Endothelial cell of umbilical vein (primary cell): ENCODE measurements at regions of chrX and their contacts with region 1.

Region 1: GRCh38 chrX:1453951-1454785 is 1.5 kb upstream of the ASMTL start:
- DNase-seq: peak; percentile 88
- H3K4me3 ChIP-seq: peak overlapping the region in 1 of 3 experiments; percentile 73
- H3K27ac ChIP-seq: no peak overlapping the region
- H3K4me1 ChIP-seq: peaks cover 2% of the 10 kb centered on the region
- H3K27me3 ChIP-seq: no peaks in the 10 kb centered on the region
- CTCF ChIP-seq: peak; percentile 92 to 97
- POLR2A ChIP-seq: no peak

Region 2: DNA sequence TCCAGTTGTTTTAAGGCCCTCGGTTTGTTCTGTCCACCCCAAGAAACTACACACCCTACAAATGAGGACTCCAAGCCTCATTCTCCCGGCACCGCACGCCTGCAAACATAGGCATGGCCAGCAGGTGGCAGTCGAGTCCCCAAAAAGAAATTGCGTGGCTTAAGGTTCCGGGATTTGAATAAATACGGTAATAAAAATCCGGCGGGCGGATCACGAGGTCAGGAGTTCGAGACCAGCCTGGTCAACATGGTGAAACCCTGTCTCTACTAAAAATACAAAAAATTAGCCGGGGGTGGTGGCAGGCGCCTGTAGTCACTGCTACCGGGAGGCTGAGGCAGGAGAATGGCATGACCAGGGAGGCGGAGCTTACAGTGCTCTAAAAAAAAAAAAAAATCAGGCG is 207.4 kb before region 1 on chrX:
- CTCF ChIA-PET with region 1: no interaction called
- POLR2A ChIA-PET with region 1: no interaction called
- dilution Hi-C with region 1: no loop called
- intact Hi-C with region 1: loop called (anchors 10 kb)
- DNase-seq: peak; percentile 63
- H3K4me3 ChIP-seq: no peak overlapping the region
- H3K27ac ChIP-seq: no peak overlapping the region
- H3K4me1 ChIP-seq: no peaks in the 10 kb centered on the region
- H3K27me3 ChIP-seq: peaks cover 2% of the 10 kb centered on the region in 2 experiments
- CTCF ChIP-seq: peak; percentile 72 to 74
- POLR2A ChIP-seq: no peak

Region 3: DNA sequence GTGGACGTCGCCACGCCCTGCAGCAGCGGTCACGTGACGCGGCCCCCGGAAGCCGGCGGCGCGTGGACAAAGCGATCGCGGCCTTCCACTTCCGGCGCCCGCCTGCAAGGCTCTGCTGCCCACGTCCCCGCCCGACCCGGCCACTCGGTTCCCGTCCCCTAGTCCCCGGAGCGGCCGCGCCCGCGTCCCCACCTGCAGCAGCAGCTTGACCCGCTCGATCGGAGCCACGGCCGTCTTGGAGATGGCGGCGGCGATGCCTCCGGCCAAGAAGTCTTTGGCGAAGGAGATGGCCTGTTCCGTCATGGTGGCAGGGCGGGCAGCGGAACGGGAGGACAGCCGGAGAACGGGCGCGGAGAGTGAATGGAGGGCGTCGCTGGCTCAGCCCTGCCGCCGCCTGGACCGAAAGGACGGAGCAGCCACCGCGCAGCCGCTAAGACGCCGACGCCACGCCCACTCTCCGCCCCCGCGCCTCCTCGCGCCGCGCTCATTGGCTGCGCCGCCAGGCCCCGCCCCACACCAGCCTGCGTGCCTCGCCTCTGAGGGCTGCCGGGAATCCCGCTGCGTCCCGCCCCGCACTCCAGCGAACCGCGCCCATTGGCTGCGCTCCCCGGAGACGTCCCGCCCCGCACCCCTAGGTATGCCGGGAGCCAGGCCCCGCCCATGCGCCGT is 62.3 kb before region 1 on chrX and contains the start of gene SLC25A6:
- CTCF ChIA-PET with region 1: no interaction called
- POLR2A ChIA-PET with region 1: no interaction called
- dilution Hi-C with region 1: no loop called
- intact Hi-C with region 1: loop called (anchors 1 kb)
- DNase-seq: peak; percentile 99
- H3K4me3 ChIP-seq: peak within 1 kb of the TSS; percentile 66 to 100 (median 89)
- H3K27ac ChIP-seq: peak within 1 kb of the TSS; percentile 73
- H3K4me1 ChIP-seq: peaks cover 15% of the 10 kb centered on the region
- H3K27me3 ChIP-seq: no peaks in the 10 kb centered on the region
- CTCF ChIP-seq: peak in 1 of 2 donors; percentile 14
- POLR2A ChIP-seq: peak; percentile 72
- total RNA-seq, gene SLC25A6: 408 and 410 TPM in 2 replicates

Region 4: DNA sequence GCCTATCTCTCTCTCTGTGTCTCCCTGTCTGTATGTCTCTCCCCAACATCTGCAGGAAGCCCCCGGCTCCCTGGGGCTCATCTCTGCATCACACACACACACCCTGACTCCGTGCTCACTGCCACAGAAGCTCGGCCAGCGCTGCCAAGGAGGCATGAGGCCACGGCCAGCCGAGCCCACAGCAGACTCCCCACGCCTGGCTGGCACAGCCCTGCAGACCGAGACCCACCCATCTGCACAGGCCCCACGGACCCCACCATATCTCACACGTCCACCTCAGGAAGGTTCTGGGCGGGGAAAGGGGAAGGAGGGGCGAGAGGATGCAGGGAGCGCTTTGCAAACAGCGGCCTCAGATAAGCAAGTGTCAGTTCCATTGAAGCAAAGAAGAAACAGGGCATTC is 33.8 kb before region 1 on chrX:
- CTCF ChIA-PET with region 1: no interaction called
- POLR2A ChIA-PET with region 1: no interaction called
- dilution Hi-C with region 1: no loop called
- intact Hi-C with region 1: no loop called
- DNase-seq: no peak
- H3K4me3 ChIP-seq: no peak overlapping the region
- H3K27ac ChIP-seq: no peak overlapping the region
- H3K4me1 ChIP-seq: no peaks in the 10 kb centered on the region
- H3K27me3 ChIP-seq: no peaks in the 10 kb centered on the region
- CTCF ChIP-seq: no peak
- POLR2A ChIP-seq: no peak

Region 5: GRCh38 chrX:1591102-1591900 is 137.1 kb after region 1 on chrX and contains the start of gene AKAP17A:
- CTCF ChIA-PET with region 1: no interaction called
- POLR2A ChIA-PET with region 1: no interaction called
- dilution Hi-C with region 1: no loop called
- intact Hi-C with region 1: loop called (anchors 1 kb)
- DNase-seq: peak; percentile 95
- H3K4me3 ChIP-seq: peak within 1 kb of the TSS; percentile 76 to 96 (median 90)
- H3K27ac ChIP-seq: peak within 1 kb of the TSS; percentile 89
- H3K4me1 ChIP-seq: peaks cover 2% of the 10 kb centered on the region
- H3K27me3 ChIP-seq: no peaks in the 10 kb centered on the region
- CTCF ChIP-seq: no peak
- POLR2A ChIP-seq: peak; percentile 88
- total RNA-seq, gene AKAP17A: 39.7 and 45.5 TPM in 2 replicates

Region 6: GRCh38 chrX:1657367-1658070 is 203.4 kb after region 1 on chrX:
- CTCF ChIA-PET with region 1: no interaction called
- POLR2A ChIA-PET with region 1: no interaction called
- dilution Hi-C with region 1: no loop called
- intact Hi-C with region 1: loop called (anchors 1 kb)
- DNase-seq: peak; percentile 77
- H3K4me3 ChIP-seq: peak overlapping the region in 2 of 3 experiments; percentile 17 to 60
- H3K27ac ChIP-seq: peak overlapping the region; percentile 38
- H3K4me1 ChIP-seq: peaks cover 8% of the 10 kb centered on the region
- H3K27me3 ChIP-seq: no peaks in the 10 kb centered on the region
- CTCF ChIP-seq: no peak
- POLR2A ChIP-seq: peak; percentile 45

Region 7: GRCh38 chrX:2589186-2590030 is 1135.2 kb after region 1 on chrX:
- CTCF ChIA-PET with region 1: no interaction called
- POLR2A ChIA-PET with region 1: no interaction called
- dilution Hi-C with region 1: no loop called
- intact Hi-C with region 1: loop called (anchors 1 kb)
- DNase-seq: no peak
- H3K4me3 ChIP-seq: no peak overlapping the region
- H3K27ac ChIP-seq: no peak overlapping the region
- H3K4me1 ChIP-seq: no peaks in the 10 kb centered on the region
- H3K27me3 ChIP-seq: peaks cover 10 to 16% of the 10 kb centered on the region in 2 experiments
- CTCF ChIP-seq: no peak
- POLR2A ChIP-seq: no peak

Region 8: DNA sequence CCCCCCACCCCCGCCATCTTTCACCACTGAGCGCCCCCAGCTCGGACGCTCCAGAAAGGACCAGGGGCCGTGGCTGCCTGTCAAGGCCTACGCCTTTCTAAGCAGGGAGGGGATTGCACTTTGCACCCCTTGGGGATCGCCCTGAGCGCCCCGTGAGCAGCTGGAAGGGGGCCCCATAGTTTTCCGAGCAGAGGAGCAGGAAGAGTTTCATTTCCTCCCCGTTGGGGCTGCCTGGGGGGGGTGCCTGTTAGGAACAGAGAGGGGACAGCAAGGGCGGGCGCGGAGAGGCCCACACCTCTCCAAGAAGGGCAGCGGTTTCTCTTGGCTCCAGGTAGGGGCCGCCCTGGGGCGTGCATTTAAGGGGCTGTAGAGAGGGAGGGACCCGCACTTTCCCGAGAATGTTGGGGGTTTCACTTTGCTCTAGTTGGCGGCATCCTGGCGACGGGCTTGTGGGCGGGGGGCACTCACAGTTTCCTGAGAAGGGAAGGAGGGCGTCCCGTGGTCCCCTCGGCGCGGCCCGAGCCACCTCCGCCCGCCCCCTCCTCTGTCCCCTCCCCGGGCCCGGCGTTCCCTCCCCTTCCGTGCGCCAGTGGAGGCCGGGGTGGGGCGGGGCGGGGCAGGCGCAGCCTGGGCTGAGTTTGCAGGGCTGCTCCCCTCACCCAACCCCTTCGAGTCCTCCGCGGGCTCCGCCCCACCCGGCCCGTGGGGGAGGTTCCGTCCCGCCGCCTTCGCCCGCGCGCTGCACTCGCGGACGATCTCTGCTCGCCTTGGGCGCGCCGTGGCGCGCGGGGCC is 1154.7 kb after region 1 on chrX:
- CTCF ChIA-PET with region 1: no interaction called
- POLR2A ChIA-PET with region 1: no interaction called
- dilution Hi-C with region 1: no loop called
- intact Hi-C with region 1: loop called (anchors 1 kb)
- DNase-seq: peak; percentile 82
- H3K4me3 ChIP-seq: peak overlapping the region; percentile 46 to 98 (median 65)
- H3K27ac ChIP-seq: peak overlapping the region; percentile 20
- H3K4me1 ChIP-seq: peaks cover 22% of the 10 kb centered on the region
- H3K27me3 ChIP-seq: no peaks in the 10 kb centered on the region
- CTCF ChIP-seq: no peak
- POLR2A ChIP-seq: peak; percentile 70

Region 9: GRCh38 chrX:2654436-2655340 is 1200.5 kb after region 1 on chrX:
- CTCF ChIA-PET with region 1: no interaction called
- POLR2A ChIA-PET with region 1: no interaction called
- dilution Hi-C with region 1: no loop called
- intact Hi-C with region 1: no loop called
- DNase-seq: no peak
- H3K4me3 ChIP-seq: no peak overlapping the region
- H3K27ac ChIP-seq: no peak overlapping the region
- H3K4me1 ChIP-seq: peaks cover 10% of the 10 kb centered on the region
- H3K27me3 ChIP-seq: no peaks in the 10 kb centered on the region
- CTCF ChIP-seq: no peak
- POLR2A ChIP-seq: no peak